ENCODE measurements at regions of chr12 and their contacts with region 1.

Region 1: DNA sequence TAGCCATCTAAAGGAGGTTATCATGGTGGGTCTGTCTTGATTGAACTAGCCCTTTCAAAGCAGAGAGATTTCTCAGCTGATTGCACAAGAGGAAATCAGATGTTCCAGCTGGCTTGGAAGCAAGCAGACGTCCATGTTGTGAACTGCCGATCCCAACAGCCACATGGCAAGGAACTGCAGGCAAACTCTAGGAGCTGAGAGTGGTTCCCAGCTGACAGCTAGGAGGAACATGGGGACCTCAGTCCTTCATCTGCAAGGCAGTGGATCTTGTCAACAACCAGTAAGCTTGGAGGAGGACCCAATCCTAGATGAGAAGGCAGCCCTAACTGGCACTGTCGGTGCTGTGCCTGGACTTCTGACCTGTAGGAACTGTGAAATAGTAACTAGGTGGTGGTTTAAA is 7.7 kb downstream of the ACVR1B start:
- DNase-seq: no peak
- ATAC-seq: no peak
- H3K4me3 ChIP-seq: no peak overlapping the region
- H3K4me3 Mint-ChIP-seq: peak overlapping the region in 1 of 10 donors; percentile 1
- H3K27ac ChIP-seq: no peak overlapping the region
- H3K27ac Mint-ChIP-seq: peak overlapping the region in 6 of 9 donors; percentile 44 to 75 (median 70)
- H3K4me1 ChIP-seq: peaks cover 0 to 16% of the 10 kb centered on the region in 2 donors
- H3K4me1 Mint-ChIP-seq: peaks cover 6 to 73% (median 68%) of the 10 kb centered on the region in 7 donors
- H3K27me3 ChIP-seq: no peaks in the 10 kb centered on the region
- H3K27me3 Mint-ChIP-seq: peaks cover 0 to 12% (median 0%) of the 10 kb centered on the region in 5 donors

Region 2: GRCh38 chr12:51970904-51971646 is 11.9 kb after region 1 on chr12:
- CTCF ChIA-PET with region 1: interaction called, 21 read pairs
- POLR2A ChIA-PET with region 1: interaction called, 7 read pairs
- intact Hi-C with region 1: loop called in 1 of 2 experiments (anchors 1 kb)
- DNase-seq: peak in 2 of 9 donors; percentile 26 to 43
- ATAC-seq: peak; percentile 53
- H3K4me3 ChIP-seq: peak overlapping the region; percentile 1
- H3K4me3 Mint-ChIP-seq: peak overlapping the region; percentile 41 to 85 (median 72)
- H3K27ac ChIP-seq: no peak overlapping the region
- H3K27ac Mint-ChIP-seq: peak overlapping the region; percentile 43 to 87 (median 68)
- H3K4me1 ChIP-seq: peaks cover 56 to 64% of the 10 kb centered on the region in 2 donors
- H3K4me1 Mint-ChIP-seq: peaks cover 60 to 76% (median 69%) of the 10 kb centered on the region in 7 donors
- H3K27me3 ChIP-seq: no peaks in the 10 kb centered on the region
- H3K27me3 Mint-ChIP-seq: peaks cover 0 to 26% (median 0%) of the 10 kb centered on the region in 5 donors